PC-3 (cell line): ENCODE measurements at regions of chr15 and their contacts with region 1.

Region 1: GRCh38 chr15:38189671-38190295 is 62.9 kb upstream of the SPRED1 start:
- DNase-seq: no peak
- ATAC-seq: no peak
- H3K4me3 ChIP-seq: no peak overlapping the region
- H3K27ac ChIP-seq: no peak overlapping the region
- H3K4me1 ChIP-seq: peaks cover 26% of the 10 kb centered on the region
- H3K27me3 ChIP-seq: no peaks in the 10 kb centered on the region
- CTCF ChIP-seq: no peak

Region 2: DNA sequence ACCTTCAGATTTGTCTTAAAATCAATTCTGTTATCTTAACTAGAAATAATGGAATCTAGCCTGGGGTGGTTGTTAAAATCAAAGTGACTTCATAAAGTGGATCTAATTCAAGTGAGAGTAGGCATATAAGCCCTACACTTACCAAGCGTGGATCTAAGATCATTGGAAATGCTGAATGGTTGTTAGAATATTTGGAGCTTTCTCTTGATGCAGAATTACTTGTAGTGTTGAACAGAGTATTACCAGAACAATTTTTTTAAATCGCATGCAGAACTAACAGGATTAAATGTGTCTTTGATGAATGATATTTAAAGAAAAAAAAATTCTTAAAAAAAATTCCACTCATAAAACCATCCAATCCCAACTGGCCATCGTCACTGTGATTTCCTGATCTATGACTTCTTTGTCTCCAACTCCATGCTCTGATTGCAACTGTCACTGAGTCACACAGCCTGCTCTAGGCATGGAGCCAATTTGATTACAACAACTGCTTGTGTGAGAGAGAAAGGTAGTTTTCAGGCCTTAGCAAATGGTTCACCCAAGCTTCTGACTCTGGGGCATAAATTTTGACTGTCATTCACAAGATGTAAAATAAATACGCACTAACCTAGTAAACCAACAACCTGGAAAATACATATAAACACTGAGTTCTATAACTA is 37.0 kb after region 1 on chr15:
- CTCF ChIA-PET with region 1: no interaction called
- POLR2A ChIA-PET with region 1: no interaction called
- intact Hi-C with region 1: loop called (anchors 5 kb)
- DNase-seq: peak; percentile 96
- ATAC-seq: peak; percentile 72
- H3K4me3 ChIP-seq: no peak overlapping the region
- H3K27ac ChIP-seq: peak overlapping the region; percentile 58
- H3K4me1 ChIP-seq: peaks cover 35% of the 10 kb centered on the region
- H3K27me3 ChIP-seq: no peaks in the 10 kb centered on the region
- CTCF ChIP-seq: no peak

Region 3: DNA sequence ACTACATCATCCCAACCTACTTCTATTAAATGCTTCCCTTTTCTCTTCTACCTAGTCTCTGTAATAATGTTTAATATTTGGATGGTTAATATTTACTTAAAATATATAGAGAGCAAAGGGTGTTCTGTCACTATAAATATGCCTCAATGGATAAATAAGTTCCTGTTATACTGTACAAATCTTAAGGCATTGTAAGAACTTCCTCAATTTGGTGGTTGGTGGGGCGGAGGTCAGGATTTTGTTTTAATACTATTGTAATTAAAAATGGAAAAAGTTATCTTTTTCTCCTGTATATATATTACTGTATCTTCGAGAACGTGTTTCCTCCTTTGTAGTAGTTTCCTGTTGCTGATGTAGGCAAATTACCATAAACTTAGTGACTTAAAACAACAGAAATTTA is 104.3 kb after region 1 on chr15:
- CTCF ChIA-PET with region 1: no interaction called
- POLR2A ChIA-PET with region 1: no interaction called
- intact Hi-C with region 1: no loop called
- DNase-seq: no peak
- ATAC-seq: no peak
- H3K4me3 ChIP-seq: no peak overlapping the region
- H3K27ac ChIP-seq: no peak overlapping the region
- H3K4me1 ChIP-seq: peaks cover 24% of the 10 kb centered on the region
- H3K27me3 ChIP-seq: no peaks in the 10 kb centered on the region
- CTCF ChIP-seq: no peak